ENCODE measurements at regions of chr6 and their contacts with region 1.

Region 1: GRCh38 chr6:168956884-168957730 is 296.5 kb downstream of the THBS2 start:
- ATAC-seq: peak; percentile 97 to 100 (median 98)
- H3K4me3 ChIP-seq: no peak overlapping the region
- H3K27ac ChIP-seq: peak overlapping the region in 1 of 2 donors; percentile 1
- H3K4me1 ChIP-seq: peaks cover 0 to 3% of the 10 kb centered on the region in 2 donors

Region 2: GRCh38 chr6:169019727-169020491 is 62.8 kb after region 1 on chr6:
- in situ Hi-C with region 1: no loop called
- ATAC-seq: peak in 1 of 8 experiments; percentile 42
- H3K4me3 ChIP-seq: no peak overlapping the region
- H3K27ac ChIP-seq: no peak overlapping the region
- H3K4me1 ChIP-seq: peaks cover 7 to 11% of the 10 kb centered on the region in 2 donors

Region 3: DNA sequence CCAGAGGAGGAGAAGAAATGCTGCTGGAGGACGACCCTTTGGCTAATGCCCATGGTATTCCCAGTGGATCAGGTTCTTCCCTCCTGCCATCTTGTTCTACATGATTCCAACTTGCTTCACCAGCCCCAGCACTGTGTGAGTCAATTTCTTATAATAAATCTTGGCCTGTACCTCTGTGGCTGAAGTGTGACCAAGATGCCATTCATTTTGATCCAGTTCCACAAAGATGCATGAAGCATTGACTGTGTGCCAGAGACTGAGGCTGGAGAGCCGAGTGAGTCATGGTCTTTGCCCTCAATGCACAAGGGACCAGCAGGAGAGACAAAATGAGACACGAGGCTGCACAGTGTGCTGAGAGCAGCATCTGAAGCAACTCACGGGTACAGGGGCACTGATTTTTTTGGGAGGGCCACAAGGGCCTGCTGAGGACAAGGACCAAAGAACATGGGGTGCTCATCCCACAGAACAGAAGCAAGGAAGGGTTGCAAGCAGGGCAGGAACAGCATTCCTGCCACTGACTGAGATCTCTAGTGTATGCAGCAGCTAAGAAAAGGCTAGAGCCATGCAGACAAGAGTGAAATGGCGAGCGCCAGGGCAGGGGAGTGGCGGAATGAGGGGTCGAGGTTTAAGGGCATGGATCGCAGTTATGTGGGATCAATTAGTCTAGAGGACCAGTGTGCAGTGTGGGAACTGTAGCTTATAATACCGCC is 89.5 kb after region 1 on chr6:
- in situ Hi-C with region 1: no loop called
- ATAC-seq: peak in 3 of 8 experiments; percentile 18 to 42 (median 28)
- H3K4me3 ChIP-seq: no peak overlapping the region
- H3K27ac ChIP-seq: no peak overlapping the region
- H3K4me1 ChIP-seq: no peaks in the 10 kb centered on the region

Region 4: DNA sequence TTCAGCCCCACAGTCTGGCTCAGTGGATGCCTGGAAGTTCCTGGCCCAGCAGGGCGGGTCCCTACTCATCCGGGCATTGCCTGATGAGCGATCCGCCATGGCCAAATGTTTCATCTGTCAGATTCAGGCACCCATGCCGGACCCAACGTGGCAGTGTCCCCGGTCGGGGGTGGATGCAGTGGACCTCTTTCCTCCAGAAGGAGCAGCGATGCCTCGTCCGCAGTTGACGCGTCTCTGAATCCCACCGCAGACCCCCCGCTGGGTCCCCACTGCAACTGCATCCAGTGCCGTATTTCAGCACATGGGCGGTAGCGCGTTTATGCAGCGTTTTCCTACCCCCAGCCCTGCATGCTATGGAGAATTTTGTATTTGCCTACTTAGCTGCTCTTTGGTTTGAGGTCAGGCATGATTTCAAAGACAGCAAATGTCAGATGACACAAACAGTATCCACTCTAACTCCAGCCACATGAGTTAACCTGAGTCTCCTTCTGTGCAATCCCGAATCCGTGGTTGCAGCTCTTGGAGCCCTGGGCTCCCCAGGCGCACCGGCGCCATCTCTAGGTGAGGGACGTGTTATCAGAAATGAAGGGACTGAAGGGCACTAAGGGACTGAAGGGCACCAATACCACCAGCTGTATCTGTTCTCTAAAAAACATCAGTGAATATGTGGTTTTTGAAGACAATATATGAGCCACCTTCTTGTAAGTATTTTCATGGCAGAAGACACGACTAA is 369.1 kb after region 1 on chr6:
- in situ Hi-C with region 1: loop called in 1 of 9 experiments (anchors 25 kb)
- ATAC-seq: peak in 3 of 8 experiments; percentile 24 to 40 (median 29)
- H3K4me3 ChIP-seq: no peak overlapping the region
- H3K27ac ChIP-seq: no peak overlapping the region
- H3K4me1 ChIP-seq: peaks cover 8 to 16% of the 10 kb centered on the region in 2 donors

Region 5: GRCh38 chr6:169487579-169488436 is 530.7 kb after region 1 on chr6:
- in situ Hi-C with region 1: loop called in 1 of 9 experiments (anchors 25 kb)
- ATAC-seq: peak in 6 of 8 experiments; percentile 41 to 90 (median 78)
- H3K4me3 ChIP-seq: no peak overlapping the region
- H3K27ac ChIP-seq: peak overlapping the region; percentile 2 to 15
- H3K4me1 ChIP-seq: peaks cover 14 to 19% of the 10 kb centered on the region in 2 donors

Region 6: DNA sequence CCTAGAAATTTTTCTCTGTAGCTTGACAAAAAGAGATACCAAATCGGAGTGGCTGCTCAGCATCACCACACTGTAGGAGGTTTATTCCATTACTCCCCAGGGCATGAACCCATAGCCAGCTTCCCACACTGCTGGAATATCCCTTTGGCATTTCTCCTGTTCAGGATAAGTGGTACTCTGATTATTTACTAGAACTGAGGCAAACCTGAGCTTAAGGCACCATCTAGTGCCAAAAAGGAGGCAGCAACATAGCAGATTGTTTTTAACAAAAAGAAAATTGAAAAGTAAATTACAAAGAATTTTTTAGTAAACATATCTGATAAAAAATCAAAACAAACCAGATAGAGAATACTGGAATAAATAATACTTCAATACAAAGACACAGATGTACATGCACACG is 563.0 kb after region 1 on chr6:
- in situ Hi-C with region 1: loop called in 1 of 9 experiments (anchors 25 kb)
- ATAC-seq: peak in 2 of 8 experiments; percentile 33 to 51
- H3K4me3 ChIP-seq: no peak overlapping the region
- H3K27ac ChIP-seq: no peak overlapping the region
- H3K4me1 ChIP-seq: no peaks in the 10 kb centered on the region